Activated CD4-positive, alpha-beta T cell treated with anti-CD3 and anti-CD28 coated beads, Interleukin-2, amount 10 ng/mL, durations not matched to agents 24 days and 14 days (primary cell): ENCODE measurements at regions of chr14 and their contacts with region 1.

Region 1: GRCh38 chr14:38135096-38135495 is 72.6 kb upstream of the SSTR1 start:
- DNase-seq: no peak
- H3K4me3 Mint-ChIP-seq: no peak overlapping the region
- H3K27ac Mint-ChIP-seq: no peak overlapping the region
- H3K4me1 Mint-ChIP-seq: no peaks in the 10 kb centered on the region
- H3K27me3 Mint-ChIP-seq: peaks cover 2% of the 10 kb centered on the region

Region 2: GRCh38 chr14:38107216-38107631 is 27.9 kb before region 1 on chr14:
- intact Hi-C with region 1: no loop called
- DNase-seq: no peak
- H3K4me3 Mint-ChIP-seq: no peak overlapping the region
- H3K27ac Mint-ChIP-seq: no peak overlapping the region
- H3K4me1 Mint-ChIP-seq: peaks cover 16% of the 10 kb centered on the region
- H3K27me3 Mint-ChIP-seq: no peaks in the 10 kb centered on the region

Region 3: GRCh38 chr14:38203929-38204716 is 69.0 kb after region 1 on chr14:
- intact Hi-C with region 1: loop called (anchors 2 kb)
- DNase-seq: no peak
- H3K4me3 Mint-ChIP-seq: no peak overlapping the region
- H3K27ac Mint-ChIP-seq: no peak overlapping the region
- H3K4me1 Mint-ChIP-seq: no peaks in the 10 kb centered on the region
- H3K27me3 Mint-ChIP-seq: peaks cover 30% of the 10 kb centered on the region